ENCODE measurements at regions of chr3 and their contacts with region 1.

Region 1: GRCh38 chr3:185983495-185984141 is 45.8 kb upstream of the TRA2B start:
- DNase-seq: no peak
- H3K4me3 ChIP-seq: no peak overlapping the region
- H3K27ac ChIP-seq: no peak overlapping the region
- H3K4me1 ChIP-seq: peaks cover 0 to 15% (median 11%) of the 10 kb centered on the region in 3 donors
- H3K27me3 ChIP-seq: peaks cover 0 to 16% (median 2%) of the 10 kb centered on the region in 4 donors
- CTCF ChIP-seq: peak; percentile 84 to 94 (median 90)
- POLR2A ChIP-seq: no peak

Region 2: DNA sequence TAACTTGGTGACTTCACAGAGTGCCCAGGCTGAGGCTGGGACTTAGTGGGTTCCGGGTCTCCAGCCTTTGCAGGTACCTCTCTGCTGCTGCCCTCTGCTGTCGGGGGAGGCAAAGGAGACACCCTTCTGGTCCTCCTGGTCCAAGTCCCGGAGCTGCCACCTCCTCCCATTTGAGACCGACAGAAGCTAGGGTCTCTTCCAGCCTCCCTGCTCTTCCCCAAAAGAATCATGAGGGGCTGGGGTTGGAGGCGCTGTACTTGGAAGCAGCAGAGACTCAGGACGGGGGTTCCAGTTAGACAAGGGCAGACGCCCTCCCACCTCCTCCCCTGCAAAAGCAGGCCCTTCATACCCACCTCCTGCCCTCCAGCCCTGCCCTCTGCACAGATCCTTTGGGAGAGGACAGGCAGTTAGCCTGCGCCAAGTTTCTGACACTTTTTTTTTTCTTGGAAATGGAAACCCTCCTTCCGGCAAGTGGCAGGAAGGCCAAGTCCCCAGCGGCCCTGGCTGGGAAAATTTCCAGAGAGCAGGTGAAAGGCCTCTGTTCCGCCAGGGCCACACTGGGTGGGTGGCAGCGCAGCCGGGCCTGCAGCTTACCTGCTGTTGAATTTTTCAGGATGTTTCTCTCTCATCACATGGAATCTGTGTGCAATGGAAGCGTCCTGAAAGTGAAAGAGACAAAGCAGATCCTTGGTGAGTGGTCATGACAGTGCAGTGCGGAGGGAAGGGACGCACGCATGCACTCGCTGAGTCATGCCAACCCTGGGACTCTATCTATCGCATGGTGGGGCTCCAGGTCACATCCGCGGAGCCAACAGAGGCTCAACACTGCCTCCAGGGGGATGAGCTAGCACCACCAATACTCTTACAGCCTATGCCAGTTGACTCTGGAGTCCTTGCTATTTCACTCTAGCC is 258.5 kb after region 1 on chr3:
- intact Hi-C with region 1: loop called (anchors 5 kb)
- DNase-seq: no peak
- H3K4me3 ChIP-seq: peak overlapping the region; percentile 10 to 55 (median 34)
- H3K27ac ChIP-seq: peak overlapping the region in 3 of 4 donors; percentile 17 to 45 (median 42)
- H3K4me1 ChIP-seq: peaks cover 9 to 15% (median 10%) of the 10 kb centered on the region in 3 donors
- H3K27me3 ChIP-seq: no peaks in the 10 kb centered on the region
- CTCF ChIP-seq: peak in 5 of 6 experiments; percentile 32 to 59 (median 39)
- POLR2A ChIP-seq: no peak

Region 3: DNA sequence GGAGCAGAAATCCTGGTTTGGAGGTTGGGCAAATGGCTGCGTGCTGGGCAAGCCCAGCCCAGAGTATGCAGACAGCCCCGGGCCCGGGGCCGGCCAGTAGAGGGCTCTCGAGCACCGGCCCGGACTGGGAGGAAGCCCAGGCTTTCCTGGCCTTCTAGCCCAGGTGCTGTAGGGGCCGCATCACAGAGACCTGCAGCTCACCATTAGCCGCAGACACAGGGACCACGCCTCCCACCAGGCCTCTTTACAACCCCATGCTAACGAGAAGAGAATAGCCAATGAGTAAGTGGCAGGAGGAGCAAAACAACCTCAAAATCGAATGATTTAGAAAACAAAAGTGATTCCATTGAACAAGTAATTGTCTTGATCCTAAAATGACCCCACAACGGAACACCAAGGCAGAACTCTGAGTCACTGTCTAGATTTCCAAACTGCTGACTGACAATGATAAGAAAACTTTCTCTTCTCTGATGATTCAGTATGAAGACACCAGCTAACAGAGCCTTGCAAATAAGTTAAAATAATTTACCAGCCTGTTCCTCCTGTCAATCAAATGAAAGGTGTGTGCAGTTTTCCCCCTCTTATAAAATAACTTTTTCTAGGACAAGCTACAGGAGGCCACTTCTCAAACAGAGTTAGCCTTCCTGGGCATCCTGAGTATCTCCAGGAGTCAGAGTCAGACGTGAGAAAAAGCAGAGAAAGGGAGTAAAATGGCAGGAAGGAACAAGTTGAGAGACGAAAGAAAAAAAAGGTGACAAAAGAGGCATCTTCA is 276.2 kb after region 1 on chr3:
- intact Hi-C with region 1: loop called (anchors 5 kb)
- DNase-seq: no peak
- H3K4me3 ChIP-seq: no peak overlapping the region
- H3K27ac ChIP-seq: peak overlapping the region in 2 of 4 donors; percentile 10 to 19
- H3K4me1 ChIP-seq: peaks cover 0 to 23% (median 6%) of the 10 kb centered on the region in 3 donors
- H3K27me3 ChIP-seq: no peaks in the 10 kb centered on the region
- CTCF ChIP-seq: peak; percentile 61 to 81 (median 78)
- POLR2A ChIP-seq: no peak

Region 4: GRCh38 chr3:186540221-186540834 is 556.7 kb after region 1 on chr3:
- intact Hi-C with region 1: loop called (anchors 10 kb)
- DNase-seq: no peak
- H3K4me3 ChIP-seq: peak overlapping the region in 1 of 4 donors; percentile 34
- H3K27ac ChIP-seq: peak overlapping the region in 1 of 4 donors; percentile 17
- H3K4me1 ChIP-seq: peaks cover 0 to 24% (median 3%) of the 10 kb centered on the region in 3 donors
- H3K27me3 ChIP-seq: no peaks in the 10 kb centered on the region
- CTCF ChIP-seq: peak; percentile 60 to 88 (median 82)
- POLR2A ChIP-seq: no peak

Measured in esophagus squamous epithelium (tissue), 5 donors.